ENCODE measurements at regions of chr5 and their contacts with region 1.

Region 1: DNA sequence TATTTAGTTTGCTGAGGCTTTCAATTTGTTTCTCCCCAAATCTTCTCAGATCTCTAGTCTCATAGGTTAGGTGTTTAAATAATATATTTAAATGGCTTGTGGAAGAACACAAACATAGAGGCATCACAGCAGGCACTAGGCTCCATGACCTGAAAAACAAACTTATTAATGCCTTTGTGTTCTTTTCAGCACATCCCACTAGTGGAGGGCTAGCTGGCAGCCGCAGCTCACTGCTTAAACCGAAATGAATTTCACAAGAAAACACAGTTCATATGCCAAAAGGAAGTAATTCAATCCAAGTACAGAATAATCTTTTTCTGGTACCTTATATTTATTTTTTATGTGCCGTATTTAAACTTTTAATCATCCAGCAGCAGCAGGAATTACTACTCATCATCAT is 382.5 kb downstream of the PLK2 start:
- DNase-seq: no peak
- ATAC-seq: 0 out of 2 replicates have a peak, but pooled peaks have one; percentile 51
- H3K4me3 ChIP-seq: no peak overlapping the region
- H3K27ac ChIP-seq: peak overlapping the region; percentile 90
- H3K4me1 ChIP-seq: peaks cover 68% of the 10 kb centered on the region
- H3K27me3 ChIP-seq: no peaks in the 10 kb centered on the region
- CTCF ChIP-seq: no peak

Region 2: GRCh38 chr5:57779383-57780223 is 297.8 kb before region 1 on chr5:
- CTCF ChIA-PET with region 1: no interaction called
- POLR2A ChIA-PET with region 1: no interaction called
- in situ Hi-C with region 1: no loop called
- intact Hi-C with region 1: loop called (anchors 5 kb)
- DNase-seq: peak; percentile 61
- ATAC-seq: peak; percentile 89
- H3K4me3 ChIP-seq: no peak overlapping the region
- H3K27ac ChIP-seq: peak overlapping the region; percentile 89
- H3K4me1 ChIP-seq: peaks cover 28% of the 10 kb centered on the region
- H3K27me3 ChIP-seq: no peaks in the 10 kb centered on the region
- CTCF ChIP-seq: peak; percentile 71

Region 3: GRCh38 chr5:58447226-58447625 is 369.8 kb after region 1 on chr5:
- CTCF ChIA-PET with region 1: no interaction called
- POLR2A ChIA-PET with region 1: no interaction called
- in situ Hi-C with region 1: no loop called
- intact Hi-C with region 1: loop called (anchors 5 kb)
- DNase-seq: no peak
- ATAC-seq: no peak
- H3K4me3 ChIP-seq: no peak overlapping the region
- H3K27ac ChIP-seq: peak overlapping the region; percentile 41; the same call in 1 of the 2 replicates
- H3K4me1 ChIP-seq: peaks cover 5% of the 10 kb centered on the region
- H3K27me3 ChIP-seq: no peaks in the 10 kb centered on the region
- CTCF ChIP-seq: no peak

Measured in Panc1 (cell line).